Naive thymus-derived CD8-positive, alpha-beta T cell (primary cell): ENCODE measurements at regions of chr1 and their contacts with region 1.

Region 1: DNA sequence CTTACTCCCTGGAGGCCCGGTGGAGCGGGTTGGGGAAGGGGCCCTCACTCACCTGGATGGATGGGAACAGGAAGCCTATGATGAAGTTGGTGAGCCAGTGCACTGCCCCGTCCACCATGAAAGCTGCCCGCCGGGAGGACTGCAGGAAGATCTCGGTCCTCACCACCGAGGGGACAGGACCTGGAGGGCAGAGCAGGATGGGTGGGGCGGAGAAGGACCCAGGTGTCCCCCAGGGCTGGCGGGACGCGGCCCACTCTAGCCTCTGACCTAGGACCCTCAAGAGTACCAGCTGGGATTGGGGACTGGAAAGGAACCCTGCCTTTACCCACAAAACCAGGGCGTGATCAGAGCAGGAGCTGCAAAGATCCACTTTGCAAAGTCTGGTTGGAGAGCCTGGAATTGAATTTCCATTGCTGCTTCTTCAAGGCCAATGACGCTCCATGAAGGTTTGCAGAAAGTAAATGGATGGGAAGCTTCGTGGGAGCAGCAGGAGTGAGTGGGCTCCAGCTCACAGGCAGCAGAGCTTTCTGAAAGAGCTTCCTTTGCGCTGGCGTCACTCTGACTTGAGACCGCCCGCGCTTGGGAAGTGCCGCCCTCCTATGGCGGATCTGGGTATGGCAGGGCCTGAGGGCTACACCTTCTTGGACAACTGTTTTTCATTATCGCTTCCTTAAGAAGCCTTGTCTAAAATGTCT is 21.4 kb downstream of the SLC2A7 start:
- DNase-seq: peak; percentile 69 to 89 (median 82)
- ATAC-seq: peak; percentile 84 to 92
- H3K4me3 Mint-ChIP-seq: peak overlapping the region; percentile 67 to 88 (median 80)
- H3K27ac Mint-ChIP-seq: peak overlapping the region in 9 of 10 donors; percentile 59 to 92 (median 86)
- H3K4me1 Mint-ChIP-seq: peaks cover 7 to 27% (median 21%) of the 10 kb centered on the region in 4 donors
- H3K27me3 Mint-ChIP-seq: no peaks in the 10 kb centered on the region

Region 2: GRCh38 chr1:8858888-8859706 is 145.8 kb before region 1 on chr1:
- POLR2A ChIA-PET with region 1: interaction called, 18 read pairs
- DNase-seq: peak; percentile 20 to 74 (median 52)
- ATAC-seq: peak; percentile 85
- H3K4me3 Mint-ChIP-seq: peak overlapping the region in 1 of 10 donors; percentile 11
- H3K27ac Mint-ChIP-seq: peak overlapping the region; percentile 21 to 90 (median 80)
- H3K4me1 Mint-ChIP-seq: peaks cover 6 to 17% (median 15%) of the 10 kb centered on the region in 4 donors
- H3K27me3 Mint-ChIP-seq: no peaks in the 10 kb centered on the region

Region 3: DNA sequence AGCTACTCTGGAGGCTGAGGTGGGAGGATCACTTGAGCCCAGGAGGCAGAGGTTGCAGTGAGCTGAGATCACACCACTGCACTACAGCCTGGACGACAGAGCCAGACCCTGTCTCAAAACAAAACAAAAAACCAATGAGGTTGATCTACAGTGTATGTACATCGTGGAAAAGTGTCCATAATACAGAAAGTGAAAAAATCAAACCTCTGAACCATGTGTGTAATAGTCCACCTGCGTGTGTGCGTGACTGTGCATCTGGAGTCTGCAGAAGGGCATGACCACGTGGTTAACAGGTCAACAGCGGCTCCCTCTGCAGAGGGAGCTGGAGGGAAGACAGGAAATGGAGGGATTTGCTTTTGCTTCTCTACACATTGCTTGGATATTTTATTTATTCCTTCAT is 93.9 kb before region 1 on chr1:
- POLR2A ChIA-PET with region 1: interaction called, 11 read pairs
- DNase-seq: no peak
- ATAC-seq: peak in 1 of 2 donors; percentile 27
- H3K4me3 Mint-ChIP-seq: peak overlapping the region in 1 of 10 donors; percentile 48
- H3K27ac Mint-ChIP-seq: peak overlapping the region in 5 of 10 donors; percentile 20 to 91 (median 74)
- H3K4me1 Mint-ChIP-seq: peaks cover 23 to 46% (median 36%) of the 10 kb centered on the region in 4 donors
- H3K27me3 Mint-ChIP-seq: no peaks in the 10 kb centered on the region

Region 4: DNA sequence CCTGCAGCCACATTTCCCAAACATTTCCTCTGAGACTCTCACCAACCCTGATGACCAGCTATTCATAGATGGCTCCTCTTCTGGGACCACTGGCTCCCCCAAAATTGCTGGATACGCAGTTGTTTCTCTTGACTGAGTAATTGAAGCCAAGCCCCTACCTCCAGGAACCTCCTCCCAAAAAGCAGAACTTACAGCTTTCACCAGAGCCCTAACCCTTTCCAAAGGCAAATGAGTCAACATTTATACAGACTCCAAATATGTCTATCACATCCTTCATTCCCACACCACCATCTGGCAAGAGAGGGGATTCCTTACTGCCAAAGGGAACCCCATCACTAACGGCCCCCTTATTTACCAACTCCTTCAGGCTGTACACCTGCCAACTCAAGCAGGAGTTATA is 79.4 kb before region 1 on chr1:
- POLR2A ChIA-PET with region 1: interaction called, 32 read pairs
- DNase-seq: no peak
- ATAC-seq: no peak
- H3K4me3 Mint-ChIP-seq: no peak overlapping the region
- H3K27ac Mint-ChIP-seq: no peak overlapping the region
- H3K4me1 Mint-ChIP-seq: peaks cover 16 to 44% (median 28%) of the 10 kb centered on the region in 4 donors
- H3K27me3 Mint-ChIP-seq: no peaks in the 10 kb centered on the region

Region 5: GRCh38 chr1:8962812-8963530 is 41.9 kb before region 1 on chr1:
- POLR2A ChIA-PET with region 1: interaction called, 11 read pairs
- DNase-seq: peak in 6 of 10 donors; percentile 30 to 52 (median 45)
- ATAC-seq: peak; percentile 29 to 49
- H3K4me3 Mint-ChIP-seq: peak overlapping the region; percentile 85 to 100 (median 91)
- H3K27ac Mint-ChIP-seq: peak overlapping the region; percentile 91 to 99 (median 94)
- H3K4me1 Mint-ChIP-seq: peaks cover 42 to 87% (median 77%) of the 10 kb centered on the region in 4 donors
- H3K27me3 Mint-ChIP-seq: no peaks in the 10 kb centered on the region

Region 6: DNA sequence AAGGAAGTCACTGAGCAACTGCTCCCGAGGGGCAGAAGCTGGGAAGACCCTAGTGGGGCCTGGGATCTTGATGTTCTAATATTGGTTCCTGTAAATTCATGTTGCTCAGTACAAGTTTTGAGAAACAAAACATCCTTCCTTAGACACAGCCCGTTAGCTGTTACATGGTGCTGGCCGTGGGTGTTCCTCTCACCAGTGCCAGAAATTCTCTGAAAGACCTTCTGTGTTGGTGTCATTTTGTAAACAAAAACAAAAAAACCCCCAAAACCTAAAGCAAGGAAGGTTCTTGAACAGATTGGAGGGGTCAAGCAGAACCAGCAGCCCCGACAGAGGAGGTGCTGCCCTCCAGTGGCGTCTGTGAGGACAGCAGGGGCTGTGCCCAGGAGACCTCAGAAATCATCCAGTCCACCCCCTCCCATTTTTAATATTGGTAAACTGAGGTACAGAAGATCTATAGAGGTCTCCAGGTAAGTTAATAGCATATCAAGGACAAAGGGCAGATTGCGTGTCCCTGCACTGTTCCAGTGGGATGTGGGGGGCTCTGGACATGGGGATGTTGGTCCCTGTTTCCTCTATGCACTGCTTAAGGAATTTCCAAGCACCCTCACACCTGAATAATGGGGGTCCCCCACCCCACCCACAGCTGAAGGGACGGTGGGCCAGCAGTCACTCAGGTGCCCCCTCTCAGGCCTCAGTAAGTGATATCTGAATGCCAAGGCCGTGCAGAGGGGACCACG is 16.8 kb before region 1 on chr1:
- POLR2A ChIA-PET with region 1: interaction called, 21 read pairs
- DNase-seq: peak; percentile 50 to 83 (median 73)
- ATAC-seq: peak; percentile 58 to 63
- H3K4me3 Mint-ChIP-seq: peak overlapping the region; percentile 46 to 85 (median 70)
- H3K27ac Mint-ChIP-seq: peak overlapping the region; percentile 92 to 97 (median 95)
- H3K4me1 Mint-ChIP-seq: peaks cover 18 to 44% (median 40%) of the 10 kb centered on the region in 4 donors
- H3K27me3 Mint-ChIP-seq: no peaks in the 10 kb centered on the region